ENCODE measurements at regions of chr6 and their contacts with region 1.

Region 1: DNA sequence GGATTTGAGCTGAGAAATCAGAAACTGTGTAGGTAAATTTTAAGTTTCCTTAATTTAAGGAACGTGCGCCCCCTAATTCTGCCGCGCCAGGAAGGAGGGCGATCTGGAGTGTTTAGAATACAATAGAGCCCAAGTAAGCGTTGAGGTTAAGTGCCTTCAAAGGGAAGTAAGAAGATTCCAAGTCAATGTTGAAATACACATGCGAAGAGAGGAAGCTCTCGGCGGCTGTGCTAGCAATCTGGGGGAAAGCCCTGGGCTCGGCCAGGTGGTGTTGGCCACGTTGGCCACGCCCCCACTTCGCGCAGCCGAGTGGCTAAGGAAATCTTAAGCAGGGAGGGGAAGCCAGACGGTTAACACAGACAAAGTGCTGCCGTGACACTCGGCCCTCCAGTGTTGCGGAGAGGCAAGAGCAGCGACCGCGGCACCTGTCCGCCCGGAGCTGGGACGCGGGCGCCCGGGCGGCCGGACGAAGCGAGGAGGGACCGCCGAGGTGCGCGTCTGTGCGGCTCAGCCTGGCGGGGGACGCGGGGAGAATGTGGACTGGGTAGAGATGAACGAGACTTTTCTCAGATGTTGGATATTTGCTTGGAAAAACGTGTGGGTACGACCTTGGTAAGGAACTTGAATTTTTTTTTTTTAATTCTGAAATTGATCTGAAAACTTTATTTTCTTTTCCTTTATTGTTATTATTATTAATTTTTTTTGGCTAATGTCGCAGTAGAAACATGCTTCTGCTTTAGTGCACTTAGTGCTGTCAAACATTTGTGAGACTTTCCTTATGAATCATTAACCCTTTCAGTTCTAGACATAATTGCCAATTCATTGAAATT is at the start of gene PRDM1:
- DNase-seq: peak; percentile 93
- H3K4me3 ChIP-seq: peak within 1 kb of the TSS; percentile 56
- H3K4me3 Mint-ChIP-seq: peak within 1 kb of the TSS; percentile 87
- H3K27ac Mint-ChIP-seq: peak within 1 kb of the TSS; percentile 86
- H3K4me1 ChIP-seq: peaks cover 18% of the 10 kb centered on the region
- H3K4me1 Mint-ChIP-seq: peaks cover 36% of the 10 kb centered on the region
- H3K27me3 ChIP-seq: no peaks in the 10 kb centered on the region
- H3K27me3 Mint-ChIP-seq: no peaks in the 10 kb centered on the region
- CTCF ChIP-seq: peak; percentile 32 to 61
- total RNA-seq, gene PRDM1: 10.4 and 11.4 TPM in 2 replicates

Region 2: GRCh38 chr6:105431226-105431625 is 655.0 kb before region 1 on chr6:
- CTCF ChIA-PET with region 1: no interaction called
- POLR2A ChIA-PET with region 1: no interaction called
- intact Hi-C with region 1: loop called (anchors 1 kb)
- DNase-seq: peak in 1 of 2 experiments; percentile 46
- H3K4me3 ChIP-seq: no peak overlapping the region
- H3K4me3 Mint-ChIP-seq: no peak overlapping the region
- H3K27ac Mint-ChIP-seq: no peak overlapping the region
- H3K4me1 ChIP-seq: peaks cover 28% of the 10 kb centered on the region
- H3K4me1 Mint-ChIP-seq: peaks cover 19% of the 10 kb centered on the region
- H3K27me3 ChIP-seq: no peaks in the 10 kb centered on the region
- H3K27me3 Mint-ChIP-seq: no peaks in the 10 kb centered on the region
- CTCF ChIP-seq: peak; percentile 45 to 73

Region 3: GRCh38 chr6:105569706-105570105 is 516.5 kb before region 1 on chr6:
- CTCF ChIA-PET with region 1: no interaction called
- POLR2A ChIA-PET with region 1: no interaction called
- intact Hi-C with region 1: loop called (anchors 2 kb)
- DNase-seq: peak in 1 of 2 experiments; percentile 72
- H3K4me3 ChIP-seq: no peak overlapping the region
- H3K4me3 Mint-ChIP-seq: no peak overlapping the region
- H3K27ac Mint-ChIP-seq: no peak overlapping the region
- H3K4me1 ChIP-seq: peaks cover 41% of the 10 kb centered on the region
- H3K4me1 Mint-ChIP-seq: peaks cover 27% of the 10 kb centered on the region
- H3K27me3 ChIP-seq: no peaks in the 10 kb centered on the region
- H3K27me3 Mint-ChIP-seq: peaks cover 8% of the 10 kb centered on the region
- CTCF ChIP-seq: no peak

Region 4: GRCh38 chr6:105892577-105893262 is 193.5 kb before region 1 on chr6:
- CTCF ChIA-PET with region 1: no interaction called
- POLR2A ChIA-PET with region 1: no interaction called
- intact Hi-C with region 1: loop called (anchors 10 kb)
- DNase-seq: no peak
- H3K4me3 ChIP-seq: no peak overlapping the region
- H3K4me3 Mint-ChIP-seq: no peak overlapping the region
- H3K27ac Mint-ChIP-seq: peak overlapping the region; percentile 14
- H3K4me1 ChIP-seq: peaks cover 42% of the 10 kb centered on the region
- H3K4me1 Mint-ChIP-seq: peaks cover 30% of the 10 kb centered on the region
- H3K27me3 ChIP-seq: no peaks in the 10 kb centered on the region
- H3K27me3 Mint-ChIP-seq: no peaks in the 10 kb centered on the region
- CTCF ChIP-seq: no peak

Region 5: GRCh38 chr6:106014930-106015329 is 71.3 kb before region 1 on chr6:
- CTCF ChIA-PET with region 1: no interaction called
- POLR2A ChIA-PET with region 1: no interaction called
- intact Hi-C with region 1: no loop called
- DNase-seq: no peak
- H3K4me3 ChIP-seq: no peak overlapping the region
- H3K4me3 Mint-ChIP-seq: no peak overlapping the region
- H3K27ac Mint-ChIP-seq: no peak overlapping the region
- H3K4me1 ChIP-seq: no peaks in the 10 kb centered on the region
- H3K4me1 Mint-ChIP-seq: peaks cover 14% of the 10 kb centered on the region
- H3K27me3 ChIP-seq: no peaks in the 10 kb centered on the region
- H3K27me3 Mint-ChIP-seq: no peaks in the 10 kb centered on the region
- CTCF ChIP-seq: no peak

Region 6: GRCh38 chr6:106046116-106046853 is 39.9 kb before region 1 on chr6:
- CTCF ChIA-PET with region 1: no interaction called
- POLR2A ChIA-PET with region 1: no interaction called
- intact Hi-C with region 1: loop called (anchors 2 kb)
- DNase-seq: peak; percentile 75 to 86
- H3K4me3 ChIP-seq: peak overlapping the region; percentile 41
- H3K4me3 Mint-ChIP-seq: peak overlapping the region; percentile 76
- H3K27ac Mint-ChIP-seq: peak overlapping the region; percentile 68
- H3K4me1 ChIP-seq: peaks cover 65% of the 10 kb centered on the region
- H3K4me1 Mint-ChIP-seq: peaks cover 56% of the 10 kb centered on the region
- H3K27me3 ChIP-seq: no peaks in the 10 kb centered on the region
- H3K27me3 Mint-ChIP-seq: no peaks in the 10 kb centered on the region
- CTCF ChIP-seq: no peak

Region 7: GRCh38 chr6:106300944-106301343 is 214.7 kb after region 1 on chr6:
- CTCF ChIA-PET with region 1: no interaction called
- POLR2A ChIA-PET with region 1: no interaction called
- intact Hi-C with region 1: loop called (anchors 1 kb)
- DNase-seq: peak in 1 of 2 experiments; percentile 24
- H3K4me3 ChIP-seq: no peak overlapping the region
- H3K4me3 Mint-ChIP-seq: no peak overlapping the region
- H3K27ac Mint-ChIP-seq: no peak overlapping the region
- H3K4me1 ChIP-seq: no peaks in the 10 kb centered on the region
- H3K4me1 Mint-ChIP-seq: no peaks in the 10 kb centered on the region
- H3K27me3 ChIP-seq: no peaks in the 10 kb centered on the region
- H3K27me3 Mint-ChIP-seq: no peaks in the 10 kb centered on the region
- CTCF ChIP-seq: peak; percentile 10 to 48

Measured in Caco-2 (cell line).